Naive thymus-derived CD4-positive, alpha-beta T cell (primary cell): ENCODE measurements at regions of chr4 and their contacts with region 1.

Region 1: GRCh38 chr4:174714393-174715211 is 114.4 kb downstream of the GLRA3 start:
- DNase-seq: peak in 2 of 9 donors; percentile 3 to 4
- ATAC-seq: peak; percentile 57
- H3K4me3 ChIP-seq: no peak overlapping the region
- H3K4me3 Mint-ChIP-seq: no peak overlapping the region
- H3K27ac ChIP-seq: no peak overlapping the region
- H3K27ac Mint-ChIP-seq: no peak overlapping the region
- H3K4me1 ChIP-seq: no peaks in the 10 kb centered on the region
- H3K4me1 Mint-ChIP-seq: no peaks in the 10 kb centered on the region
- H3K27me3 ChIP-seq: no peaks in the 10 kb centered on the region
- H3K27me3 Mint-ChIP-seq: peaks cover 0 to 9% (median 0%) of the 10 kb centered on the region in 5 donors

Region 2: GRCh38 chr4:174365018-174365587 is 349.5 kb before region 1 on chr4:
- CTCF ChIA-PET with region 1: no interaction called
- POLR2A ChIA-PET with region 1: no interaction called
- intact Hi-C with region 1: loop called in 1 of 2 experiments (anchors 1 kb)
- DNase-seq: peak in 5 of 9 donors; percentile 2 to 31 (median 15)
- ATAC-seq: no peak
- H3K4me3 ChIP-seq: no peak overlapping the region
- H3K4me3 Mint-ChIP-seq: no peak overlapping the region
- H3K27ac ChIP-seq: no peak overlapping the region
- H3K27ac Mint-ChIP-seq: no peak overlapping the region
- H3K4me1 ChIP-seq: no peaks in the 10 kb centered on the region
- H3K4me1 Mint-ChIP-seq: no peaks in the 10 kb centered on the region
- H3K27me3 ChIP-seq: peaks cover 0 to 2% of the 10 kb centered on the region in 2 donors
- H3K27me3 Mint-ChIP-seq: peaks cover 0 to 16% (median 0%) of the 10 kb centered on the region in 5 donors

Region 3: DNA sequence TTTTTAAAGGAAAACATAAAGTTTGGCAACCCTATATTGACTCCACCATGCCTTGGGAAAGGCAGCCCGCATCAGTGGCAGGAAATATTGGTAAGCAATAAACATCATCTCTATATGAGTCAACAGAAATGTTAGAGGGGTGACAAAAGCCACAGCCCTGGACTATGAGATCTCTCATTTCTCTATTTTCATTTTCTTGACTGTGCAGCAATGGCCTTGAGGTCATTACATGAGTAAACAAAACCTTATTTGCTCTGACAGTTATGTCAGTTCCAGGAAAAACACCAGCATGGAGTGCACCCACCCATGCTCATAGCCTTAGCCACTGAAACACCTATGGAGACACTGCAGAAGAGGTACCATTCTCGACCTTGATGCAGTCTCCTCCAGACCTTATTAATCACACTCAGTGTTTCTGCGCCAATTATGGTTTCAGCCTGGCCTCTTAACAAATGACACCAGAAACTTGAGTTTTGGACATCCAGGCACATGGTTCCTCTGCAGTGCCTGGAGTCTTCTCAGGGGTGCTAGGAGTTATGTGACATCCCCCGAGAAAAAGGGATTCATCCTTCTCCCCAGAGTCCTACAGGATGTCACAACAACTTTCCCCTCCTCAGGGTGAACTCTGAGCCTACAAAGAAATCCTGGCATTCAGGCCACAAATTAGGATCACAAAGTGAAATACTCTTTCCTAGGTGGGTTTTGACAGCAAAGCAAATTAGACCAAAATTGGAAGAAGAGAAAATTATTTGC is 176.3 kb before region 1 on chr4:
- CTCF ChIA-PET with region 1: no interaction called
- POLR2A ChIA-PET with region 1: no interaction called
- intact Hi-C with region 1: loop called in 1 of 2 experiments (anchors 5 kb)
- DNase-seq: no peak
- ATAC-seq: peak; percentile 42
- H3K4me3 ChIP-seq: no peak overlapping the region
- H3K4me3 Mint-ChIP-seq: peak overlapping the region in 1 of 10 donors; percentile 12
- H3K27ac ChIP-seq: no peak overlapping the region
- H3K27ac Mint-ChIP-seq: peak overlapping the region in 1 of 9 donors; percentile 77
- H3K4me1 ChIP-seq: no peaks in the 10 kb centered on the region
- H3K4me1 Mint-ChIP-seq: peaks cover 0 to 17% (median 0%) of the 10 kb centered on the region in 7 donors
- H3K27me3 ChIP-seq: no peaks in the 10 kb centered on the region
- H3K27me3 Mint-ChIP-seq: peaks cover 0 to 4% (median 0%) of the 10 kb centered on the region in 5 donors

Region 4: GRCh38 chr4:174734181-174734580 is 19.6 kb after region 1 on chr4:
- CTCF ChIA-PET with region 1: no interaction called
- POLR2A ChIA-PET with region 1: no interaction called
- intact Hi-C with region 1: no loop called
- DNase-seq: no peak
- ATAC-seq: no peak
- H3K4me3 ChIP-seq: no peak overlapping the region
- H3K4me3 Mint-ChIP-seq: no peak overlapping the region
- H3K27ac ChIP-seq: no peak overlapping the region
- H3K27ac Mint-ChIP-seq: no peak overlapping the region
- H3K4me1 ChIP-seq: no peaks in the 10 kb centered on the region
- H3K4me1 Mint-ChIP-seq: no peaks in the 10 kb centered on the region
- H3K27me3 ChIP-seq: no peaks in the 10 kb centered on the region
- H3K27me3 Mint-ChIP-seq: no peaks in the 10 kb centered on the region

Region 5: GRCh38 chr4:174749091-174749490 is 34.5 kb after region 1 on chr4:
- CTCF ChIA-PET with region 1: no interaction called
- POLR2A ChIA-PET with region 1: no interaction called
- intact Hi-C with region 1: no loop called
- DNase-seq: no peak
- ATAC-seq: no peak
- H3K4me3 ChIP-seq: no peak overlapping the region
- H3K4me3 Mint-ChIP-seq: no peak overlapping the region
- H3K27ac ChIP-seq: no peak overlapping the region
- H3K27ac Mint-ChIP-seq: no peak overlapping the region
- H3K4me1 ChIP-seq: no peaks in the 10 kb centered on the region
- H3K4me1 Mint-ChIP-seq: no peaks in the 10 kb centered on the region
- H3K27me3 ChIP-seq: no peaks in the 10 kb centered on the region
- H3K27me3 Mint-ChIP-seq: no peaks in the 10 kb centered on the region

Region 6: DNA sequence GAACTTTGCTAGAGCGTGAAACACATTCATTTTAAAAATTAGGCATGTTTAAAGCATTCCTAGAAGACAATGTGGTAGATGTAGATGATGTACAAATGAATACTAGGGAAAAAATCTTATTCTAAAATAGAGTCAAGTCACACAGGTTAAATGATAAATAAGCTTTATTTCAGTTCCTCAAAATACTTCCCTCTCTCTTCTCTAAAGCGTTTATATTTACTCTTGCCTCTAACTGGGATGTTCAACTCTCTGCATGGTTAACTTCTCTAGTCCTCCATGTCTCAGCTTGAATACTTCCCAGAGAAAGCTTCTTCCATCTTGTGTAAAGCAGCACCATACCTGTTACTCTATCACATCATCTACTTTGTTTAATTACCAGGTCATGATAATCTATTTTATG is 145.3 kb after region 1 on chr4:
- CTCF ChIA-PET with region 1: no interaction called
- POLR2A ChIA-PET with region 1: no interaction called
- intact Hi-C with region 1: no loop called
- DNase-seq: no peak
- ATAC-seq: no peak
- H3K4me3 ChIP-seq: no peak overlapping the region
- H3K4me3 Mint-ChIP-seq: no peak overlapping the region
- H3K27ac ChIP-seq: no peak overlapping the region
- H3K27ac Mint-ChIP-seq: no peak overlapping the region
- H3K4me1 ChIP-seq: no peaks in the 10 kb centered on the region
- H3K4me1 Mint-ChIP-seq: no peaks in the 10 kb centered on the region
- H3K27me3 ChIP-seq: no peaks in the 10 kb centered on the region
- H3K27me3 Mint-ChIP-seq: no peaks in the 10 kb centered on the region